Uterus (tissue), 4 donors: ENCODE measurements at regions of chr3 and their contacts with region 1.

Region 1: GRCh38 chr3:76370749-76371520 is 585.6 kb upstream of the ZNF717 start:
- DNase-seq: no peak
- H3K4me3 ChIP-seq: no peak overlapping the region
- H3K27ac ChIP-seq: no peak overlapping the region
- H3K4me1 ChIP-seq: no peaks in the 10 kb centered on the region
- H3K27me3 ChIP-seq: no peaks in the 10 kb centered on the region
- CTCF ChIP-seq: no peak
- POLR2A ChIP-seq: no peak

Region 2: GRCh38 chr3:76308541-76308940 is 62.4 kb before region 1 on chr3:
- intact Hi-C with region 1: no loop called
- DNase-seq: no peak
- H3K4me3 ChIP-seq: no peak overlapping the region
- H3K27ac ChIP-seq: no peak overlapping the region
- H3K4me1 ChIP-seq: no peaks in the 10 kb centered on the region
- H3K27me3 ChIP-seq: no peaks in the 10 kb centered on the region
- CTCF ChIP-seq: no peak
- POLR2A ChIP-seq: no peak

Region 3: GRCh38 chr3:77873598-77873997 is 1502.7 kb after region 1 on chr3:
- intact Hi-C with region 1: loop called (anchors 10 kb)
- DNase-seq: no peak
- H3K4me3 ChIP-seq: no peak overlapping the region
- H3K27ac ChIP-seq: no peak overlapping the region
- H3K4me1 ChIP-seq: no peaks in the 10 kb centered on the region
- H3K27me3 ChIP-seq: no peaks in the 10 kb centered on the region
- CTCF ChIP-seq: no peak
- POLR2A ChIP-seq: no peak